Activated CD8-positive, alpha-beta memory T cell treated with anti-CD3 and anti-CD28 coated beads, Interleukin-2, amount 10 ng/mL, durations not matched to agents 7 days and 5 days (primary cell): ENCODE measurements at regions of chr3 and their contacts with region 1.

Region 1: GRCh38 chr3:123652346-123652984 is 67.6 kb upstream of the HACD2 start:
- DNase-seq: peak; percentile 53
- ATAC-seq: peak; percentile 66
- H3K4me3 Mint-ChIP-seq: no peak overlapping the region
- H3K27ac Mint-ChIP-seq: no peak overlapping the region
- H3K4me1 Mint-ChIP-seq: no peaks in the 10 kb centered on the region
- H3K27me3 Mint-ChIP-seq: no peaks in the 10 kb centered on the region

Region 2: GRCh38 chr3:123036352-123037014 is 616.0 kb before region 1 on chr3:
- CTCF ChIA-PET with region 1: no interaction called
- DNase-seq: no peak
- ATAC-seq: no peak
- H3K4me3 Mint-ChIP-seq: no peak overlapping the region
- H3K27ac Mint-ChIP-seq: no peak overlapping the region
- H3K4me1 Mint-ChIP-seq: no peaks in the 10 kb centered on the region
- H3K27me3 Mint-ChIP-seq: peaks cover 64% of the 10 kb centered on the region

Region 3: DNA sequence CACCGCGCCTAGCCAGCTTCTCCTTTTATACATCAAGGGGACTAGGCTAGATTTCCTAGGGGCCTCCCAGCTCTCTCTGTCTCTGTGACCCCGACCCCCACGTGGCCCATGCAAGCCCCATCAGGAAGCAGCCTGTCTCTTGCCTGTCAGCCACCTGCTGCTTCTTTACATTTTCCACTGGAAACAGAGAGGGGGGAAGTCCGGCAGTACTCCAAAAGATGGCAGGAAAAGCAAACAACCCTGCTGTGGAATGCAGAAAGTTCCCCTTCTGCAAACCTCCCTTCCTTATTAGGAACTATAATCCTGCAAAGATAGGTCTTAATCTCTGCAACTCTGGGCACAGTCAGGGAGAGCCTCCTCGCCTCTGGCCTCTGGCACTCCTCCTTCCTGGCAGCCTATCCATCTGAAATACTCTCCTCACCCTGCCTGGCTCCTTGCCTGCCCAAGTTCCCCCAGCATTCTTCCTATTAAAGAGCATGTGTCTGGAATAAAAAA is 20.3 kb before region 1 on chr3:
- CTCF ChIA-PET with region 1: no interaction called
- DNase-seq: no peak
- ATAC-seq: no peak
- H3K4me3 Mint-ChIP-seq: no peak overlapping the region
- H3K27ac Mint-ChIP-seq: no peak overlapping the region
- H3K4me1 Mint-ChIP-seq: no peaks in the 10 kb centered on the region
- H3K27me3 Mint-ChIP-seq: no peaks in the 10 kb centered on the region

Region 4: DNA sequence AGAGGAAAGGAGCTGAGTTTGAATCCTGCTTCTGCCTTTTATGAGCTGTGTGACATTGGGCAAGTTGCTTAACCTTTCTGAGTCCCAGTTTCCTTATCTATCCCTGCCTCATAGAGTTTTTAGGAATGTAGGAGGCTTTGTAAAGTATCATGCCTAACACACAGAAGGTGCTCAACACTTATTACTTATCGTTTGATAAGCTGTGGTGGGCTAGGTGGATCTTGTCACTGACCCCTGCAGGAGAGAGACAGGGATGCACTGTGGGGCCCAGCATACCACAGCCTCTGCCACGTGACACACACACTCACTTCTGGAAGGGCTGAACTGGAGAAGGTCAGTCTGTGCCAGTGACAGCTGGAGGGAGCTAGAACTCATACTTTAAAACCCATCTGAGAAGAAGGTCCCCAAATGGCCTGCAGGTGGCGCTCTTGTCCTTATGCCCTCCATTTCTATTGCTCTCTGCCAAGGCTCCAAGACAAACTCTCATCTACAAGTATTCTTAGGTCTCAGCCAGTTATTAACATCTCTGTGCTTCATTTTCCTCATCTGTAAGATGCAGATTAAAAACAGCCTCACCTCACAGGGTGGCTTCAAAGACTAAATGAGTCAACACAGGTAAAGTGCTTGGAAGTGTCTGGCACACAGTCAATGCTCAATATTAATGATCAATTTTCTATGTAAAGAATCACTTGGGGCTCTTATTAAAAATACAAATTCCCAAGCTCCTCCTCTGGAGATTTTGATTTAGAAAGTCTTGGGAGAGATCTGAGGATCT is 10.1 kb before region 1 on chr3:
- CTCF ChIA-PET with region 1: interaction called, 26 read pairs
- DNase-seq: peak; percentile 77
- ATAC-seq: peak; percentile 80
- H3K4me3 Mint-ChIP-seq: no peak overlapping the region
- H3K27ac Mint-ChIP-seq: no peak overlapping the region
- H3K4me1 Mint-ChIP-seq: no peaks in the 10 kb centered on the region
- H3K27me3 Mint-ChIP-seq: no peaks in the 10 kb centered on the region